Activated CD8-positive, alpha-beta T cell treated with anti-CD3 and anti-CD28 coated beads, Interleukin-2, amount 10 ng/mL, durations not matched to agents 7 days and 5 days (primary cell): ENCODE measurements at regions of chr12 and their contacts with region 1.

Region 1: GRCh38 chr12:51341259-51342007 is 5.0 kb downstream of the CELA1 start:
- DNase-seq: peak; percentile 81
- ATAC-seq: peak; percentile 86
- H3K4me3 Mint-ChIP-seq: no peak overlapping the region
- H3K27ac Mint-ChIP-seq: peak overlapping the region; percentile 65
- H3K4me1 Mint-ChIP-seq: peaks cover 9% of the 10 kb centered on the region
- H3K27me3 Mint-ChIP-seq: no peaks in the 10 kb centered on the region

Region 2: DNA sequence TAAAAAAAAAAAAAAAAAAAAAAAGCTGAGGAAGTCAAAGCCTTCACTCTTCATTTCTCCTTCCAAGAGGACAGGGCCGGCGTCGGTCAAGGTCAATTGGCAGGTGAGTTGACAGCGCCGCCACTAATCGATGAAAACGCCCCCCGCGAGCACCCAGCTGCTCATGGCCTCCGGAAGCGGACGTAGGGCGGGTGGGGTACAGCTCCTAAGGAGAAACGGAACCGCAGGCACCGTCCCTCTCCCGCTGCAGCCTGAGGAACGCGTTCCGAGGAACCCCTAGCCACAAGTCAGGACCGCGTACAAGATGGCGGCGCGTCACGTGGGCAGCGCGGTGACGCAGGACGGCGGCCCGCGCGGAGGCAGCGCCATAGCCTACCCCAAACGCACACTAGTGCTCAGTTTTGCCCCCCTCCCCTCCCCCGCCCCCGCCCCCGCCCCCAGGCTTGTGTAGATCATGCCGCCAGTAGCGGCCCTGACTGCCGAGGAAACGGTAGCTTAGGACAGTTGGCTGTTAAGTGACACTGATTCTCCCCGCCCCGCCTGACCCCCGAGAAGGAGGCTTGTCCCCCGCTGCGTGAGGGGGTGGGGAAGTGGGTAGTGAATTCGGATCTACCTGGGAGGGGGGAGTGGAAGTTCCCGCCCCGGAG is 577.7 kb before region 1 on chr12 and contains the start of gene ATF1:
- CTCF ChIA-PET with region 1: interaction called, 10 read pairs
- POLR2A ChIA-PET with region 1: no interaction called
- DNase-seq: peak; percentile 92
- ATAC-seq: peak; percentile 81
- H3K4me3 Mint-ChIP-seq: peak within 1 kb of the TSS; percentile 81
- H3K27ac Mint-ChIP-seq: peak within 1 kb of the TSS; percentile 89
- H3K4me1 Mint-ChIP-seq: peaks cover 30% of the 10 kb centered on the region
- H3K27me3 Mint-ChIP-seq: no peaks in the 10 kb centered on the region
- total RNA-seq, gene ATF1: 35.4 to 36.7 TPM

Region 3: DNA sequence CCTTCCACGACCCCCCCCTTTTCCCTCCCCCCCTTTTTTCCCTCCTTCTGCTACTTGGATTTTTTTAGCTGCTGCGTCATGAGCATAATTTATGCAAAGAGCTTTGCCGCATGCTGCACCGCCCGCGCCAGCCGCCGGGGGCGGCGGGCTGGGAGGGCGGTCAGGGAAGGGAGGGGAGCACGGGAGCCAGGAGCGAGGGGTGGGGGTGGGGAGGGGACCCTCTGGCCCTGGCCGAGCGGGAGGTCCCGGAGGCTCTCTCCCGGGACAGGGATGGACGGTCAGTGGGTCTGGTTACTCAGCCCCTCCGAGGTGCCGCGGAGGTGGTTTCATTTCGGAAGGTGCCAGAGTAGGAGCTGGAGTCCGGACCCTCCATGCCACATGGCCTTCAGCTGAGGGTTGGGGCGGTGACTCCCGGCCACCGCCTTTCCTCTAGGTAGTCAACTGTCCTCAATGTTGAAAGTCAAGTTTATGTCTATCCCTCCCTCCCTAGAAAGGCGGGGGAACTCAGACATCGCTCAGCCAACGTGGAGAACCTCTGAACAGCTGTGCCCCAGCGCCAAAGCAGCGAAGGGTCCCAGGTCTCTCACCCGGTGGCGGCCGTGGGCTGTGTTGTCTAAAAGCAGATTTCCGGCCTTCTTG is 123.3 kb before region 1 on chr12 and contains the start of gene POU6F1:
- CTCF ChIA-PET with region 1: interaction called, 12 read pairs
- POLR2A ChIA-PET with region 1: no interaction called
- DNase-seq: peak; percentile 73
- ATAC-seq: peak; percentile 89
- H3K4me3 Mint-ChIP-seq: peak within 1 kb of the TSS; percentile 85
- H3K27ac Mint-ChIP-seq: peak within 1 kb of the TSS; percentile 84
- H3K4me1 Mint-ChIP-seq: peaks cover 11% of the 10 kb centered on the region
- H3K27me3 Mint-ChIP-seq: no peaks in the 10 kb centered on the region
- total RNA-seq, gene POU6F1: 1.3 to 2.2 TPM

Region 4: GRCh38 chr12:51262758-51263177 is 78.7 kb before region 1 on chr12:
- CTCF ChIA-PET with region 1: interaction called, 19 read pairs
- POLR2A ChIA-PET with region 1: no interaction called
- DNase-seq: peak; percentile 37
- ATAC-seq: no peak
- H3K4me3 Mint-ChIP-seq: no peak overlapping the region
- H3K27ac Mint-ChIP-seq: no peak overlapping the region
- H3K4me1 Mint-ChIP-seq: peaks cover 20% of the 10 kb centered on the region
- H3K27me3 Mint-ChIP-seq: no peaks in the 10 kb centered on the region

Region 5: GRCh38 chr12:51281202-51281924 is 60.1 kb before region 1 on chr12:
- CTCF ChIA-PET with region 1: interaction called, 10 read pairs
- POLR2A ChIA-PET with region 1: no interaction called
- DNase-seq: no peak
- ATAC-seq: no peak
- H3K4me3 Mint-ChIP-seq: no peak overlapping the region
- H3K27ac Mint-ChIP-seq: no peak overlapping the region
- H3K4me1 Mint-ChIP-seq: no peaks in the 10 kb centered on the region
- H3K27me3 Mint-ChIP-seq: no peaks in the 10 kb centered on the region

Region 6: GRCh38 chr12:51307655-51308593 is 33.5 kb before region 1 on chr12:
- CTCF ChIA-PET with region 1: interaction called, 18 read pairs
- POLR2A ChIA-PET with region 1: no interaction called
- DNase-seq: no peak
- ATAC-seq: no peak
- H3K4me3 Mint-ChIP-seq: no peak overlapping the region
- H3K27ac Mint-ChIP-seq: peak overlapping the region; percentile 30
- H3K4me1 Mint-ChIP-seq: peaks cover 10% of the 10 kb centered on the region
- H3K27me3 Mint-ChIP-seq: no peaks in the 10 kb centered on the region

Region 7: GRCh38 chr12:51351913-51352532 is 10.6 kb after region 1 on chr12:
- CTCF ChIA-PET with region 1: interaction called, 60 read pairs
- POLR2A ChIA-PET with region 1: interaction called, 3 read pairs
- DNase-seq: peak; percentile 51
- ATAC-seq: no peak
- H3K4me3 Mint-ChIP-seq: no peak overlapping the region
- H3K27ac Mint-ChIP-seq: no peak overlapping the region
- H3K4me1 Mint-ChIP-seq: no peaks in the 10 kb centered on the region
- H3K27me3 Mint-ChIP-seq: no peaks in the 10 kb centered on the region

Region 8: DNA sequence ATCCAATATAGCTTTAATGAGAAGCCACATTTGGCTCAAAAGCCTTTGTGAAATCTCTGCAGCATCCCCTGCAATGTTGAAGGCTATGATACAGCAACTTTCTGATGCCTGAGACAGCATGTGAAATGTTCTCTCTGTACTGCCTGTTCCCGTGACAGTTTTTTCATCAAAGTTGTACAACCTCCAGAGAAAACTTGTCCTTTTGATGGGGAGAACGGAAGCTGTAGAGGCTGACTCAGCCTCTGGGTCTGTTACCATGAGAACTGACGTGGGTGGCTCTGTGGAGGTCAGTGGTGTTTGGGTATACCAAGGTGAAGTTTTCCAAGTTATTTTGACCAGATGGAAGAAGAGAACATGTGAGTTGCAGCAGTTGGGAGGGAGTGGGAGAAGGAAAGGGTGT is 100.2 kb after region 1 on chr12:
- CTCF ChIA-PET with region 1: no interaction called
- POLR2A ChIA-PET with region 1: no interaction called
- DNase-seq: no peak
- ATAC-seq: no peak
- H3K4me3 Mint-ChIP-seq: no peak overlapping the region
- H3K27ac Mint-ChIP-seq: no peak overlapping the region
- H3K4me1 Mint-ChIP-seq: peaks cover 41% of the 10 kb centered on the region
- H3K27me3 Mint-ChIP-seq: no peaks in the 10 kb centered on the region

Region 9: DNA sequence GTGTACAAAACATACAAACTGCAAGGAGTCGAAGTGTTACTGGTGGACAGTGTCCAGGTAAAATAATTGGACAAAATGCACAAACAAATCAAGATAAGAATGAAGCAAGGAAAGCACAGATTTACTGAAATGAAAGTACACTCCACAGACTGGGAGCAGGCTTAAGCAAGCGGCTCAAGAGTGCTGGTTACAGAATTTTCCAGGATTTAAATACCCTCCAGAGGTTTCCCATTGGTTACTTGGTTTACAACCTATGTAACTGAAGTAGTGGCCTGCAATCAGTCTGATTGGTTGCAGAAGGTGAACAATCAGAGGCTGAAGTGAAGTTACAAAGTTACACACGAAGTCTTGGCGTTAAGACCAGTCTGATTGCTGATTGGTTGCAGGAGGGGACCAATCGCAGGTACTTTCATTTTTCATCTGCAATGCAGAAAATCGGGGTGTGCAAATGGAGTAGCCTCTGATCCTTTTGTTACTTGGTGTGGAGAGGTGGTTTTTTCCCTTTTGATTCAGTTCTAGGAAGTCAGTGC is 238.0 kb after region 1 on chr12:
- CTCF ChIA-PET with region 1: no interaction called
- POLR2A ChIA-PET with region 1: no interaction called
- DNase-seq: no peak
- ATAC-seq: no peak
- H3K4me3 Mint-ChIP-seq: no peak overlapping the region
- H3K27ac Mint-ChIP-seq: no peak overlapping the region
- H3K4me1 Mint-ChIP-seq: no peaks in the 10 kb centered on the region
- H3K27me3 Mint-ChIP-seq: peaks cover 12% of the 10 kb centered on the region

Region 10: DNA sequence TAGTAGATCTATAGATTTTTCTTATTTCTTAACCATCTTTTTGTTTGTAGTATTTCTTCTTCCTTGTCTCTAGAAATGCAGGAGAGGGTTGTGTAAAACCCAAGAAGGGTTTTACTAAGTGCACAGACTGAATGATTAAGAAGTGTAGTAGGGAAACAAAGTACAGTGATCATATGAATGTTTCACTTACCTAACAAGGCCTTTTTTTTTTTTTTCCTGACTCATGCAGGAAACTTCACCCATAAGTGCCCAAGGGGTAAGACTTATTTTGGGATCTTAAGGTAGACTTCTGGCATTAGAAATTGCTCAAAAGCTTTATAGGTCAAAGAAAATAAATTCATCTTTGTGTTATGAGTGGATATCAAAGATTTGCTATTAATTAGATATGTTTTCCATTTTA is 259.8 kb after region 1 on chr12:
- CTCF ChIA-PET with region 1: no interaction called
- POLR2A ChIA-PET with region 1: no interaction called
- DNase-seq: no peak
- ATAC-seq: no peak
- H3K4me3 Mint-ChIP-seq: no peak overlapping the region
- H3K27ac Mint-ChIP-seq: no peak overlapping the region
- H3K4me1 Mint-ChIP-seq: no peaks in the 10 kb centered on the region
- H3K27me3 Mint-ChIP-seq: peaks cover 27% of the 10 kb centered on the region